Right ventricle myocardium superior (tissue), 1 donor: ENCODE measurements at regions of chr22 and their contacts with region 1.

Region 1: GRCh38 chr22:21712894-21713712 is 22.5 kb downstream of the YPEL1 start:
- DNase-seq: peak; percentile 70
- ATAC-seq: peak; percentile 97

Region 2: GRCh38 chr22:21849489-21849888 is 136.4 kb after region 1 on chr22:
- intact Hi-C with region 1: no loop called
- DNase-seq: no peak
- ATAC-seq: peak; percentile 74

Region 3: DNA sequence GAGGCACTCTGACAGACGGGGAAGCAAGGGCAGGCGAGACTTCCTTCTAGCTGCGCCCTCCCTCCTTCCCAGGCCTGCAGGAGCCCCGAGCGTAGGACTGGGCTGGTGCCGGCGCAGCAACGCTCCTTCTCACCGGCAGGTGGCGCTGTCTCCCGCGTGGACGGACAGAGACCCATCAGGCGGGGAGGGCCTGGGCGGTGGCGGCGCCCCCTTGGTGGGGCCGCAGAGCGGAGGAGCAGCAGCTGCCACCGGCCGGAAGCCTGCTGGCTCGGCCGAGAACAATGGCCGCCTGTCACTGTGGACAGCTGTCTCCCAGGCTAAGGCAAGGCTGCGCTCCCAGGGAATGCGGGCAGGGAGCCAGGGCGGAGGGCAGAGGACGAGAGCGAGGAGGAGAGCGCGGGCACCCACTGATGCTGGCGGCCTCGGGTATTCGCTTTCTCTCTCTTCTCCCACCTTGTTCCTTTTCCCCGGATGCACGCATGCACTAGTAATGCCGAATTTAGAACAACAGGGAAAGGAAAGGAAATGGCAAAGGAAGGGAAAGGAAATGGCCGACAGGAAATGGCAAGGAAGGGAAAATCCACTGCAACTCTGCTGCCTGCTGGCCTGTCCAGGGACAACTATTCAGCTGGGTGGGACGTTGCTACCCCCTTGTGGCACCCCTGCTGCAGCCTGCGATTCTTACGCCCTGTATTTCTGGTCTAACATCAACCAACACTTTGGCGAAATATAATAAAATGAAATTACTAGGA is 225.1 kb after region 1 on chr22:
- intact Hi-C with region 1: loop called (anchors 2 kb)
- DNase-seq: peak; percentile 97
- ATAC-seq: peak; percentile 95

Region 4: DNA sequence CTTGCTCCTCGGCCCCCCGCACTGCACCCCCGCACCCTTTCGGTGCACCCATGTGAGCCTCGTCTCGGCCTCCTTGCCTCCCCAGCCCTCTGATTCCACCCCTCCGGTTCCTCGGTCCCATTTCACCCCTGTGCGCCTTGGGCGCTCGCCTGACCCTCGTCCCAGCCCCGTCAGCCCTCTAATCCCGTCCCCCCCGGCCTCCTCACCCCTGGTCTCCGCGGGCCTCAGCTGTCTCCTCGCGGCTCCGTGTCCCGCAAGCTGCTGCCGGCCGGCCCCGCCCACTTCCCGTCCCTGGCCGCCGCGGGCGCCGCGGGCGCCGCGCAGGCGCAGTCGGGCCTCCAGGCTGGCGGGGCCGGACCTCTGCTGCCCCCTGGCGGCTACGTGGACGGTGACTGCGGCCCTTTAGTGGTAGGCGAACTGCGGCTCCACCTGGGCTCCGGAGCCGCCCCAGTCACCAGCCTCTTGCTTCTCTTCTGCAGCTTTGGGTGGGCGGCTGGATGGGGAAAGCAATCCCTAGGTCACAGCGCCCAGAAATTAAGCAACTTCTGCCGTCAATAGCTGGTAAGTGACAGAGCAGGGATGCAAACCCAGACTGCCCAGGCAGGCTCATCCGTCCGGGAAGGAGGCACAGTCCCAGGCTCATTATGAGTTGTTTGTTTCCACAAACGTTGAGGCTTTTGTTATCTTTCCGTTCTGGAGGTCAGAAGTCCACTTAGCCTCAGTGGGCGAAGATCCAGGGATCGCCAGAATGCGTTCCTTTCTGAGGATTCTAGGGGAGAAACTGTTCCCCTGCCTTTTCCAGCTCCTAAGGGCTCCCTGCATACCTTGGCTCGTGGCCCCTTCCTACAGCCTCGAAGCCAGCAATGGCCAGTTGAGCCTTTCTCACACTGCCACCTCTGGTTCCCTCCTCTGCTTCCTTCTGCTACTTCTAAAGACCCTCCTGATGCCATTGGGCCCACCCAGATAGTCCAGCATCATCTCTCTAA is 239.8 kb after region 1 on chr22 and contains the start of gene PPM1F:
- intact Hi-C with region 1: loop called (anchors 5 kb)
- DNase-seq: peak; percentile 93
- ATAC-seq: peak; percentile 94
- total RNA-seq, gene PPM1F: 19.3 TPM